ENCODE measurements at regions of chr20 and their contacts with region 1.

Region 1: GRCh38 chr20:5529331-5530148 is 212.8 kb upstream of the PROKR2 start:
- DNase-seq: peak; percentile 95

Region 2: DNA sequence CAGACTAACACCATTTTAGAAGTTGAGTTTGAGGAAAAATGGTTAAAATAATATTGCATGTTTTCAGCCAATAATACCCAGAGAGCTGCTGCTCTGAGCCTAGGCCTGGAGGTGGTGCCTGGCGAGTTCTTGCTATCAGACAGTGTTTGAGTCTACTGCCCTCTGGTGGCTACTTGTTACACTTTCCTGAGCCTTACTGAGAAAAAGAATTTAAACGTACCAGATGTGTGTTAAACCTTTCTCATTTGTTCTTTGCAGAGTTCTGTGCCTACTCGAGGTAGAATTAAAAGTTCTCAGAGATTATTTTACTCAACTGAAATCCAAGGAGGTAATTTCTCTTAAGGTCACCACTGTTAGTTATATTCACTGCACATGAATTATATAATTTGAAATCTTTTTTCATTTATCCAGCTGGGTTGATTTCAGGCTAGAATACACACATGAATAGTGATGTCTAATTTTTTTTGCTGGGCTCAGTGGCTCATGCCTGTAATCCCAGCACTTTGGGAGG is 258.9 kb after region 1 on chr20:
- intact Hi-C with region 1: loop called (anchors 5 to 10 kb)
- DNase-seq: peak; percentile 86

Region 3: GRCh38 chr20:5797843-5798462 is 268.4 kb after region 1 on chr20:
- intact Hi-C with region 1: loop called in 1 of 2 experiments (anchors 10 kb)
- DNase-seq: no peak

Region 4: DNA sequence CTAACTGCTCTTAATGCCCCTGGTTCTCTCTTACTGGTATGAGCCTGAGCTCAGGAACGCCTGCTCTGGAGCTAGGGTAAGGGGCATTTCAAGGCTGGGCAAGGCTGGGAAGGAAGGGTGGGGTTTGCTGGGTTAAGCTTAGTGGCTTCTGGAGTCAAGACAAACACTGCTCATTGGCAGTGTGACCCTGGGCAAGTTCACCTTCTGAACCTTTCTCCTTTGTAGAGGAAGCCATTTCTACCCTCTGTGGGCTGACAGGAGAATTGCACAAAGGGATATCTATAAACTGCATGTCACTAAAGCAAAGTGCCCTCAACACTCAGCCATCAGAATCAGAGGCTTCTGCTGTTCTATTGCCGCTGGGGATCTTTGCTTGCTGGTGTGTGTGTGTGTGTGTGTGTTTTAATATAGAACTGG is 544.6 kb after region 1 on chr20:
- intact Hi-C with region 1: loop called in 1 of 2 experiments (anchors 5 kb)
- DNase-seq: no peak

Measured in posterior vena cava (tissue), 2 donors.